Endothelial cell of umbilical vein (primary cell): ENCODE measurements at regions of chr3 and their contacts with region 1.

Region 1: GRCh38 chr3:42012935-42013690 is 51.2 kb upstream of the ULK4 start:
- DNase-seq: peak; percentile 72
- H3K4me3 ChIP-seq: peak overlapping the region; percentile 25 to 86 (median 56)
- H3K27ac ChIP-seq: no peak overlapping the region
- H3K4me1 ChIP-seq: peaks cover 13% of the 10 kb centered on the region
- H3K27me3 ChIP-seq: no peaks in the 10 kb centered on the region
- CTCF ChIP-seq: no peak
- POLR2A ChIP-seq: no peak

Region 2: GRCh38 chr3:41893977-41894376 is 119.1 kb before region 1 on chr3:
- CTCF ChIA-PET with region 1: no interaction called
- POLR2A ChIA-PET with region 1: no interaction called
- dilution Hi-C with region 1: no loop called
- intact Hi-C with region 1: loop called (anchors 1 kb)
- DNase-seq: peak; percentile 75
- H3K4me3 ChIP-seq: no peak overlapping the region
- H3K27ac ChIP-seq: no peak overlapping the region
- H3K4me1 ChIP-seq: no peaks in the 10 kb centered on the region
- H3K27me3 ChIP-seq: no peaks in the 10 kb centered on the region
- CTCF ChIP-seq: peak; percentile 14 to 22
- POLR2A ChIP-seq: no peak

Region 3: GRCh38 chr3:41997702-41998550 is 15.2 kb before region 1 on chr3:
- CTCF ChIA-PET with region 1: interaction called, 14 read pairs
- POLR2A ChIA-PET with region 1: no interaction called
- dilution Hi-C with region 1: no loop called
- intact Hi-C with region 1: no loop called
- DNase-seq: no peak
- H3K4me3 ChIP-seq: no peak overlapping the region
- H3K27ac ChIP-seq: no peak overlapping the region
- H3K4me1 ChIP-seq: no peaks in the 10 kb centered on the region
- H3K27me3 ChIP-seq: no peaks in the 10 kb centered on the region
- CTCF ChIP-seq: peak; percentile 17 to 27
- POLR2A ChIP-seq: no peak

Region 4: DNA sequence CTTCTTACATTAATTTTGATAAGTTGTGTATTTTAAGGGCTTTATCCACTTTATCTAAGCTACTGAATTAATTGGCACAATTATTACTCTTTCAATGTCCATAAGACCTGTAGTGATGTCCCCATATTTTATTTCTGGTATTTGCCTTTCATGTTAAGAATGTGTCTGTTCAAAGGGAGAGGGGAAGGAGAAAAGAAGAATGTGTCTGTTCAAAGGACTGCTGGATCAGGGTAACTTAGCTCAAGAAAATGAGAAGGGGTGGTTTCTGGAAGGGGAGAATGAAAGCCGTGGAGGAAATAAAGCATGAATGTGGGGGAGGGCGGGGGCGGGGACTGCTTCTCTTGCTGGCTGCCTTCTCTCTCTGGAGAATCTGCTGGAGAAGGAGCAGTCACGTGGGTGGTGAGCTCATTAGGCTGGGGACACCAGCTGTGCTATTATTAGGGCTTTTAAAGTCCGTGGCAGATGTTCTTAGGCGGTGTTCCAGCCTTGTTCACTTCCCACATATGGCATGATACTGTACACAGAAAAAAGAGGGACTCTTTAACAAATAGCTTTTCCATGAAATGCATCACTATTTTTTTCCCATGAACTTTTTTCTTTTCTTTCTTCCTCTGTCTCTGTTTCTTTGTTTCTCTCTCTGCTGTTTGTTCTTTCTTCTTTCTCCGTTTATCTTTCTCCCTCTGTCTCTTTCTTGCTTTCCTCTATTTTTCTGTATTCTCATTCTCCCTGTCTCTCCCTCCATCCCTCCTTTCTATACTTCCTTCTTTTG is 12.4 kb after region 1 on chr3:
- CTCF ChIA-PET with region 1: interaction called, 12 read pairs
- POLR2A ChIA-PET with region 1: interaction called, 9 read pairs
- dilution Hi-C with region 1: no loop called
- intact Hi-C with region 1: no loop called
- DNase-seq: peak; percentile 98
- H3K4me3 ChIP-seq: peak overlapping the region in 1 of 3 experiments; percentile 46
- H3K27ac ChIP-seq: peak overlapping the region; percentile 93
- H3K4me1 ChIP-seq: peaks cover 40% of the 10 kb centered on the region
- H3K27me3 ChIP-seq: no peaks in the 10 kb centered on the region
- CTCF ChIP-seq: no peak
- POLR2A ChIP-seq: peak; percentile 18

Region 5: GRCh38 chr3:42043027-42043796 is 30.1 kb after region 1 on chr3:
- CTCF ChIA-PET with region 1: interaction called, 7 read pairs
- POLR2A ChIA-PET with region 1: no interaction called
- dilution Hi-C with region 1: no loop called
- intact Hi-C with region 1: loop called (anchors 1 kb)
- DNase-seq: peak; percentile 98
- H3K4me3 ChIP-seq: no peak overlapping the region
- H3K27ac ChIP-seq: peak overlapping the region; percentile 91
- H3K4me1 ChIP-seq: peaks cover 35% of the 10 kb centered on the region
- H3K27me3 ChIP-seq: no peaks in the 10 kb centered on the region
- CTCF ChIP-seq: no peak
- POLR2A ChIP-seq: peak; percentile 32

Region 6: DNA sequence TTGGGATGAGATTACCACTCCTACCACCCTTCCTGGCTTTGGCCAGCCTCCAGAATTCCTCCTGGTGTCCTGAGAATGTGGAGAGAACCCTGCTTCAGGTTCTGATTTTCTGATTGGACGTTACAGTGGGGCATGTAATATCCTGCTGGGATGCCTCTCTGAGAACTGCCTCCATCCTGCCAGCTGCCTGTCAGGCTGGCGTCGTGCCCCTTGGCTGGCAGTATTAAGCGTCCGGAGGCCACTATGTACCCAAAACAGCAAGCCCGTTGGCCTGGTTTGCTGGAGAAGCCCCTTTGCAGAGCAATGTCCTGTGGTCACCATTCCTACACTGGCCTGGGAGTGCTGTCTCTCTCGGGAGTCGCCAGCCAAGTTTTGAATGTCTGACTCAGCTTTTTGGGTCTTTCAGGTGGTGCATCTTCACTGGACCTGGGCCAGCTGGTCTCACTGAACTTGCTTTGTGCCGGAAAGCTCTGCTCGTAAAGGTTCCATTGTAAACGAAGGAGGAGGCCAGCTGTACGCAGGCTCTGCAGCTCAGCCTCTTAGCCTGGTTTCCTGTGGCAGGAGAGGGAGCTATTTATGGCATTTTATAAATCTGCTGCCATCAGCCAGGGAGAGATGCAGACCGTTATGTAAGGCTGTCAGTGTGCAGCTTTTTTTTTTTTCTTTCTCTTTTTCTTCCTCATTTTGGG is 58.9 kb after region 1 on chr3:
- CTCF ChIA-PET with region 1: interaction called, 8 read pairs
- POLR2A ChIA-PET with region 1: interaction called, 3 read pairs
- dilution Hi-C with region 1: no loop called
- intact Hi-C with region 1: loop called (anchors 1 kb)
- DNase-seq: peak; percentile 98
- H3K4me3 ChIP-seq: peak overlapping the region in 1 of 3 experiments; percentile 20
- H3K27ac ChIP-seq: peak overlapping the region; percentile 67
- H3K4me1 ChIP-seq: peaks cover 26% of the 10 kb centered on the region
- H3K27me3 ChIP-seq: no peaks in the 10 kb centered on the region
- CTCF ChIP-seq: no peak
- POLR2A ChIP-seq: no peak

Region 7: GRCh38 chr3:42184651-42185443 is 171.7 kb after region 1 on chr3:
- CTCF ChIA-PET with region 1: no interaction called
- POLR2A ChIA-PET with region 1: no interaction called
- dilution Hi-C with region 1: no loop called
- intact Hi-C with region 1: loop called (anchors 1 kb)
- DNase-seq: peak; percentile 84
- H3K4me3 ChIP-seq: no peak overlapping the region
- H3K27ac ChIP-seq: peak overlapping the region; percentile 95
- H3K4me1 ChIP-seq: peaks cover 21% of the 10 kb centered on the region
- H3K27me3 ChIP-seq: no peaks in the 10 kb centered on the region
- CTCF ChIP-seq: no peak
- POLR2A ChIP-seq: no peak